ENCODE measurements at regions of chr4 and their contacts with region 1.

Region 1: DNA sequence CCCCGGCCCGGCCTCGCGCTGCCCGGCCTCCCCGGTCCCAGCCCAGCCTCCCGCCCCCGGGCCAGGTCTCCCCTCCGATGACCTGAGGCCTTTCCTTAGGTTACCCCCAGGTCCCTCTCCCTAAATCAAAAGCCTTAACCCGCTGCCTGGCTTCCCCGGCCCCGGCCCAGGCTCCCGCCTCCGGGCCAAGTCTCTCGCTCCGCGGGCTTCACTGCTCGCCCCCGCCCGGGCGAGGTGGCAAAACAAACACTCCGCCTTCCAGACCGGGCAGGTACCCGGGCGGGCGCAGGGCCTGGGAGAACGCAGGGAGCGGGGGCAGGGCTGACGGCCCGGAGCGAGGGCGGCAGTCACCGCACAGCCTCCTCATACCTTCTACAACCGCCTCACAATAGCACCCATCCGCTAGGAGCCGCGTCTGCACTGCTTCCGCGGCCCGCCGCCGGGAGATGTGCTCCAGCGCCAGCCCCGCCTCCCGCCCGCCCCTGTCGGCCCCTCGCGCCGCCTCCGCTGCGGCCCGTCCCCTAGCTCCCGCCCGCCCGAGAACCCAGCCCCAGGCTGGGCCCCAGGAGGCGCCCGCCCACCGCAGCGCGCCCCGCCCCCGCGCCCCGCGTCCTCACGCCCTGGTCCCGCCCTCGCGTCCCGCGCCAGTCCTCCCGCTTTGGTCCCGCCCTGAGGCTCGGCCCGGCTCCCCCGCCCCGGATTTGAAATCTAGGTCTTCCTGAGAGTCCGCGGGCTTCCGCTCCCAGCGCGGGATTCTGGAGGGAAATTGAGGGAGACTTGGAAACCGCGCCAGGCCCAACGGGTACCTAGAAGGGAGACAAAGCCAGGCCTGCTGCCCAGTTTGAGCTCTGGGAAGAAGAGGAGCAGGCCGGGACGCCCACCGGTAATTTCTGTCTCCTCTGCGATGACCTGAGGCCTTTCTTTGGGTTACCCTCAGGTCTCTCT is at the starts of genes CASP3 and PRIMPOL:
- DNase-seq: peak; percentile 96
- H3K4me3 Mint-ChIP-seq: peak within 1 kb of the TSS; percentile 95
- H3K27ac Mint-ChIP-seq: peak within 1 kb of the TSS; percentile 91
- H3K4me1 Mint-ChIP-seq: peaks cover 59% of the 10 kb centered on the region
- H3K27me3 Mint-ChIP-seq: no peaks in the 10 kb centered on the region
- total RNA-seq, gene CASP3: 116 and 121 TPM in 2 replicates
- total RNA-seq, gene PRIMPOL: 16.4 and 19.7 TPM in 2 replicates

Region 2: GRCh38 chr4:183659029-183659871 is 990.0 kb before region 1 on chr4 and contains the starts of genes RWDD4 and TRAPPC11:
- intact Hi-C with region 1: loop called (anchors 5 kb)
- DNase-seq: peak; percentile 95
- H3K4me3 Mint-ChIP-seq: peak within 1 kb of the TSS; percentile 100
- H3K27ac Mint-ChIP-seq: peak within 1 kb of the TSS; percentile 96
- H3K4me1 Mint-ChIP-seq: peaks cover 32% of the 10 kb centered on the region
- H3K27me3 Mint-ChIP-seq: no peaks in the 10 kb centered on the region
- total RNA-seq, gene RWDD4: 23.9 and 24.2 TPM in 2 replicates
- total RNA-seq, gene TRAPPC11: 23.0 and 33.7 TPM in 2 replicates

Region 3: DNA sequence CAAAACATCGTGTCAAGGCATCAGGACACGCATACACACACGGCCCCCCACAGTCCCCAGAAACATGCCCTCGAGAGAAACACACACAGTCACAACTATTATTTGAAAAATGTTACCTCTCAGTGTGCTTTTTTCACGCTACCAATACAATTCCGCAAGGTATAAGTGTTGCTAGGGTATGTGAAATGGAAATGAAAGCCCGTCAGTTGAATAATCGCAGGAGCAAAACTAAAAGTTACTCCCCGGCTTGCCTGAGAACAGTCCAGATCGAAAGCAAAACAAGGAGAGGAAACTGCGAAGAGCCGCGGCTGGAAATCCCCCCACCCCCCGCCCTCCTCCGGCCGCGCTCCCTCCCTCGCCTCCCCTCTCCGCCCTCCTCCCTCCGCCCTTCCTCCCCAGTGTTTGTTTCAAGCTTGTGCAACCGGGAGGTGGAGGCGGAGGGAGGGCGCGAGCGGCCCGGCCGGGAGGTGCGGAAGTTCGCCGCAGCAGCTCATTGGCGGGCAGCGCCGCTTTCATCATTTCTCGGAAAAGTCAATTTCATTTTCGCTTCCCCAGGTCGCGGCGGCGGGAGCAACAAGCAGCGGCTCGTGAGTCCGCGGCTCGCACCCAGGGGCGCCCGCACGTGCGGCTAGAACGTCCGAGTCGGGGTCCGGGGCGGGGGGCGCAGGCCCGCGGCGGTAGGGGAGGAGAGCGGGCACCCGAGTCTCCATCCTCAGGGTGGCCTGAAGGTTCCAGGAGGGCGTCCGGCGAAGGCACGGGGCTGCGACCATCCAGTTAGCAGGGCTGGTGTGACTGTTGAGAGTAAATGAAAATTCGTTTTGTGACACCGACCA is 174.8 kb before region 1 on chr4 and contains the start of gene IRF2:
- intact Hi-C with region 1: loop called (anchors 1 kb)
- DNase-seq: peak; percentile 94
- H3K4me3 Mint-ChIP-seq: peak within 1 kb of the TSS; percentile 97
- H3K27ac Mint-ChIP-seq: peak within 1 kb of the TSS; percentile 96
- H3K4me1 Mint-ChIP-seq: peaks cover 64% of the 10 kb centered on the region
- H3K27me3 Mint-ChIP-seq: no peaks in the 10 kb centered on the region
- total RNA-seq, gene IRF2: 64.2 and 75.8 TPM in 2 replicates

Region 4: DNA sequence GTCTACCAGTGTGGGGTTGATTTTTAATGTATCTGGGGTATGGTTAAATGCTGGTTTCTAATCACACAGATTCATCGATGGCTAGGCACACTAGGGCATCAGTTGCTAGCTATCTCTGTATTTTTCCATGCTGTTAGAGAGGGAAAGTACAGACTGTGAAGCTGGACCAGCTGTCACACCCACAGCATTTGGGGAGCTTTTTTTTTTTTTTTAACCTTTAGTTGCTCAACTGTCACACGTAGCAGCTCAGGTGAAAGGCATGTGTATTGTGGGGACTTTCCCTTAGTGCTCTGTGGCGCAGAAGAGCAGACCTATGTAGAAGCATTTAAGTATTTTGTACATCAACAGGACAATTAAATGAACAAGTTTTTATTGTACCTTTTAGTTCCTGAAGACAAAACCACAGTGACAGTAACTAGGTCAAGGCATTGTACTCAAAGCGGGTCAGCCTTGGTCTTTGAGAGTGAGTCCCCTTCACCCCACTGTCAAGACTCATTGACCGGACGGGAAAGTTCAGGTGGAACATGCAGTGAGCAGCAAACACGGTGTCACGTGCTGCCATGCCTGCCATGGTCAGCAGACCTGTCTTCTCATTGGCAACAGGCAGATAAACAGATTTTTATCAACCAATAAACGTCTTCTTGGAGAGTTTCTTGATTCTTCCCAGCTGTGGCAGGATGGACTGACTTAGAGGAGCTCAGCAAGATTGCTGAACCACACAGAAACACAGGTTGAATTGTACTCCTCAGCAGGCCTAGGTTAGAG is 65.4 kb before region 1 on chr4:
- intact Hi-C with region 1: loop called (anchors 1 kb)
- DNase-seq: peak; percentile 9
- H3K4me3 Mint-ChIP-seq: peak overlapping the region; percentile 20
- H3K27ac Mint-ChIP-seq: peak overlapping the region; percentile 79
- H3K4me1 Mint-ChIP-seq: peaks cover 25% of the 10 kb centered on the region
- H3K27me3 Mint-ChIP-seq: no peaks in the 10 kb centered on the region

Region 5: DNA sequence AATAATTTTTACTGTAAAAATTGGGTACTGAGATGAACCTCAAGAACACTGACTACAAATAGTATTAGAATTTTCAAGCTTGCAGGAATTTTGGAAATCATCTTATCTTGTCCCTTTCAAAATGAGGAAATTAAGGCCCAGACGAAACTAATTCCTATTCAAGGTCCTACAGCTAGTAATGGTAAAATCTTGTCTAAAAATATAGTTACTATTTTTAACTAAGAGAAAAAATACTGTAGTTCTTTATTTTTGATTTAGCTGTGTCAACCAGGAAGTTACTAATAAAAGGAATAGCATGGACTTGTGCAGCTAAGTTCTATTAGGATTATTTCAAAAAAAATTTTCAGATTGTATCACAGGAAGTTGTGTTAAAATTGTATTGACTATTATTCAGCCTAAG is 12.9 kb after region 1 on chr4:
- intact Hi-C with region 1: no loop called
- DNase-seq: no peak
- H3K4me3 Mint-ChIP-seq: no peak overlapping the region
- H3K27ac Mint-ChIP-seq: no peak overlapping the region
- H3K4me1 Mint-ChIP-seq: peaks cover 13% of the 10 kb centered on the region
- H3K27me3 Mint-ChIP-seq: no peaks in the 10 kb centered on the region

Region 6: GRCh38 chr4:184733654-184734524 is 84.6 kb after region 1 on chr4 and contains the start of gene CENPU:
- intact Hi-C with region 1: loop called (anchors 1 kb)
- DNase-seq: peak; percentile 96
- H3K4me3 Mint-ChIP-seq: peak within 1 kb of the TSS; percentile 94
- H3K27ac Mint-ChIP-seq: peak within 1 kb of the TSS; percentile 95
- H3K4me1 Mint-ChIP-seq: peaks cover 50% of the 10 kb centered on the region
- H3K27me3 Mint-ChIP-seq: no peaks in the 10 kb centered on the region
- total RNA-seq, gene CENPU: 78.3 and 80.3 TPM in 2 replicates

Region 7: DNA sequence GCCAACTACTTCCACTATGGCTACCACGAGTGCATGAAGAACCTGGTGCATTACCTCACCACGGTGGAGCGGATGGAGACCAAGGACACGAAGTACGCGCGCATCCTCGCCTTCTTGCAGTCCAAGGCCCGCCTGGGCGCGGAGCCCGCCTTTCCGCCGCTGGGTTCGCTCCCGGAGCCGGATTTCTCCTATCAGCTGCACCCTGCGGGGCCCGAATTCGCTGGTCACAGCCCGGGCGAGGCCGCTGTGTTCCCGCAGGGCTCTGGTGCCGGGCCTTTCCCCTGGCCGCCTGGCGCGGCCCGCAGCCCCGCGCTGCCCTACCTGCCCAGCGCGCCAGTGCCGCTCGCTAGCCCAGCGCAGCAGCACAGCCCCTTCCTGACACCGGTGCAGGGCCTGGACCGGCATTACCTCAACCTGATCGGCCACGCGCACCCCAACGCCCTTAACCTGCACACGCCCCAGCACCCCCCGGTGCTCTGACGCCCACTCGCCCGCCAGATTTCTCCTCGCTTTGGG is 371.1 kb after region 1 on chr4:
- intact Hi-C with region 1: no loop called
- DNase-seq: no peak
- H3K4me3 Mint-ChIP-seq: no peak overlapping the region
- H3K27ac Mint-ChIP-seq: peak overlapping the region; percentile 55
- H3K4me1 Mint-ChIP-seq: no peaks in the 10 kb centered on the region
- H3K27me3 Mint-ChIP-seq: peaks cover 88% of the 10 kb centered on the region

Region 8: DNA sequence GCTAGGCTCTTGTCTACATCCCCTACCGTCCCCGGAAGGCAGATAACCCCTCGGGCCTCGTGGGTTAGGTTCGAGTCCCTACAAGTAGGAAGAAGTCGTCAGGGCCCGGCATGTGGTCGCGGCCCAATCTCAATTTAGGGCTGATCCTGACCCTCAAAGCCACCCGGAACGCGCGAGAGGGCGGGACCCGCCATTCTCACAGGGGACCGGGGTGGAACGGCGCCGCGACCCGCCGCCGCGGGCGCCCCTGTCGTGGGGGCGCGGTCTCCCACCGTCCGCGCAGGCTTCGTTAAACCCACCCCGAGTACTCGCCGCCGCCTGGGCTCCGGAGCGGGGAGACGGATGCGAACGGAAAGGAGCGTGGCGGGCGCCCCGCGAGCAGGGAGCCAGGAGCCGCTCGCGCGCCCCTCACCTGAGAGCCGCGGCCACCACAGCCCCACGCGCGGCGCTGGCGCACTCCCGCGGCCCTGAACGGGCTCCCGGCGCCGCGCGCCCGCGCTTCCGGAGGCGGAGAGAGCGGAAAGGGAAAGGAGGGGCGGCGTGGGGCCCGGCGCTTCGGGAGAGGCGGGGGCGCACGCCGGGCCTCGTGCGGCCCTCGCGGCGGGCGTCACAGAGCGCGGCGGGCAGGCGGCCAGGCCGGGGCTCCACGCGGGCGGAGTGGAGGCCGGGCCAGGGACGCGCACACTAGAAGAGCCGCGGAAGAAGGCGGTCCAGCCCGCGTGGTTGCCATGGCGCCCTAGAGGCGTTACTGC is 554.4 kb after region 1 on chr4 and contains the start of gene CFAP97:
- intact Hi-C with region 1: loop called (anchors 2 kb)
- DNase-seq: peak; percentile 75
- H3K4me3 Mint-ChIP-seq: peak within 1 kb of the TSS; percentile 99
- H3K27ac Mint-ChIP-seq: peak within 1 kb of the TSS; percentile 100
- H3K4me1 Mint-ChIP-seq: peaks cover 36% of the 10 kb centered on the region
- H3K27me3 Mint-ChIP-seq: peaks cover 1% of the 10 kb centered on the region
- total RNA-seq, gene CFAP97: 52.4 and 54.6 TPM in 2 replicates